Right cardiac atrium (tissue), 5 donors: ENCODE measurements at regions of chr13 and their contacts with region 1.

Region 1: GRCh38 chr13:77751513-77752456 is 54.3 kb downstream of the SLAIN1 start:
- DNase-seq: no peak
- ATAC-seq: peak; percentile 63 to 70
- H3K4me3 ChIP-seq: no peak overlapping the region
- H3K27ac ChIP-seq: no peak overlapping the region
- H3K4me1 ChIP-seq: peaks cover 3% of the 10 kb centered on the region
- H3K27me3 ChIP-seq: no peaks in the 10 kb centered on the region

Region 2: DNA sequence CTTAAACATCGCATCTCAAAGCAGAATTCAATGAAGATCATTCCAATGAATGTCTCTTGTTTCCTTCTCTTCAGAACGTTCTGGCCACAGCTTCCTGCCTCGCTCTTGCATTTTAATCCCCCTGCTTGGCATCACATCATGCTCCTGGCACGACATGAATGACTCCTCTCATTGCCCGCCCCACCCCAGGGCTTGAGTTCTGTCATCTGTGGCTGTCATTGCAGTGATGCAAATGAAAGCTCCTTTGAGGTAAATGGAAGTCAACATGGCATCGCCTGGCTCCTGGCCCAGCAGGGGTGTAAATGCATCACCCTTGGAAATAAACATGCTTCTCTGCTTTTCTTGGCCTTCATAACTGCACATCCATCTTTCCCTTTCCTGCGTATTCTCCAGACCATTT is 167.7 kb before region 1 on chr13:
- intact Hi-C with region 1: loop called in 1 of 4 experiments (anchors 5 kb)
- DNase-seq: no peak
- ATAC-seq: no peak
- H3K4me3 ChIP-seq: no peak overlapping the region
- H3K27ac ChIP-seq: no peak overlapping the region
- H3K4me1 ChIP-seq: no peaks in the 10 kb centered on the region
- H3K27me3 ChIP-seq: no peaks in the 10 kb centered on the region

Region 3: DNA sequence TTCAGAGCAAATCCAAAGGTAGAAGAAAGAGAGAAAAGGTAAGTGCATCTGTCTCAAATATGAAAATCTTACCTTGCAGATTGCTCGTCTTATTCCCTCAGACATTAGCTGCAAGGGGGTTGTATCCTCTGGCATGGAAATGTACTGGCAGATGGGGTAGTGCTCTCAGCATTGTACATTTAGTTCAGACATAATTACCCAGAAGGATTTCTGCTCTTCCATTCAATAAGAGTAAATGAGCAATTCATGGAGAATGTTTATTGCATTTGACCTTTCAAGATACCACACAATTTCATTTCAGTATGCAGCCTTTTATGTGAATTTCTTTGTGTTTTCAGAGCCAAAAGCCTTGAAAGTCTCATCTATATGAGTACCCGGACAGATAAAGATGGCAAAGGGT is 152.4 kb before region 1 on chr13:
- intact Hi-C with region 1: loop called in 2 of 4 experiments (anchors 5 kb)
- DNase-seq: no peak
- ATAC-seq: no peak
- H3K4me3 ChIP-seq: no peak overlapping the region
- H3K27ac ChIP-seq: no peak overlapping the region
- H3K4me1 ChIP-seq: no peaks in the 10 kb centered on the region
- H3K27me3 ChIP-seq: no peaks in the 10 kb centered on the region

Region 4: DNA sequence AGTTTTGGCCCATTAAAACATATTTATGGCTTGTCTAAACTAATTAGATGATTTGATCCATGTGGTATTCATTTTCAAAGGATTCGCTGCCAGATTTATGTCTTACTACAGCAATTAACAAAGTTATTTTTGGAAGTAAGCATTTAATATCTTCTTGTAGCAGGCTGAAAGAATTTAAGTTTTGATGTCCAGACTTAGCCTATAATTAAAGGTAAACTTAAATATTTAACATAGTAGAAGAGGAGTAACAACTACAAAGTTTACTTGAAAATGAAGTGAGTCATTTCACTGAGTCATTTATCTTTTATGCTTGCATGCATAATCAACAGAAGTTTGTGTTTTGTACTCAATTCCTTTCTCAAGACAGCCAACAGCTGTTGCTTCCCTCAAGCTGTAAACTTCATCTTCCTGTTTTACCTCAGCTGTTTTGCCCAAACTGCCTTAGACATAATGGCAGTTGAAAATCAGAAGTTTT is 108.8 kb after region 1 on chr13:
- intact Hi-C with region 1: no loop called
- DNase-seq: no peak
- ATAC-seq: peak; percentile 52 to 65
- H3K4me3 ChIP-seq: no peak overlapping the region
- H3K27ac ChIP-seq: no peak overlapping the region
- H3K4me1 ChIP-seq: no peaks in the 10 kb centered on the region
- H3K27me3 ChIP-seq: no peaks in the 10 kb centered on the region